ENCODE measurements at regions of chr5 and their contacts with region 1.

Region 1: DNA sequence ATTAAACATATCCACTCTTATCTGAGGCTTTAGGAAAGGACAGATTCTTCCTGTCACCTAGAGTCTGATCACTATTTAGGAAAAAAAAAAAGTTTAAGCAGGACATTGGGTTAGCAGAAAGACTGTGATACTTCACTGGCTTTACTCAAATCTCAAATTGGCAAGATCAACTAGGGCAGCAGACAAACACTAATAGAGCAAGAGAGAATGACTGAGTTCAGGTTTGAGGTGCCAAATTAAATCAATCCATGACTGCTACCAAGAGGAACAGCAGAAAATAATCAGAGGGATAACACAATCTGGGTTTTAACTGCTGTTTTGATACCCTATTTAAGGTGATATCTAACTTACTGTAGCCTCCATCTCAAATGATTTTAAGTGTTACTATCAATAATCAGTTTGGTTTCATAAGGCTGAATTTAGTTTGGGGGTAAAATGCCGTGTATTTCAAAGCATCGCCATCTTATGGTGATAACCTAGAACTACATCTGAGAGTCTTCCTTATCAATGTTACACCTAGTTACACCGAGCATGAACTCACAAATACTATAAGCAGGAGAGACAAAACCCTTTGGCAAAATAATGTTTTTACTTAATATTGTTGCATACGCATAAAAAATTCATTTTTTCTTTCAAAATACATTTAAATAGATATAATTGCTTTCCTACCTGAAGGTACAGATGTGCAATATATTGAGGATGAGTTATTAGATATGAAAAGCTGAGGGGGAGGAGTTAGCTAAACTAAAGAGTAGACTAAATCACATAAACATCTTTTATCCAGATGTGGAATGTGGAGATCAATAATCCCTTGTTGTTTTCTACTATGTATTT is 286.4 kb upstream of the CDH12 start:
- DNase-seq: no peak
- ATAC-seq: peak; percentile 94 to 97 (median 96)
- H3K4me3 ChIP-seq: no peak overlapping the region
- H3K27ac ChIP-seq: peak overlapping the region in 1 of 3 donors; percentile 26
- H3K4me1 ChIP-seq: peaks cover 0 to 20% (median 1%) of the 10 kb centered on the region in 4 donors
- H3K27me3 ChIP-seq: no peaks in the 10 kb centered on the region
- CTCF ChIP-seq: peak; percentile 48 to 76 (median 68)
- POLR2A ChIP-seq: no peak

Region 2: GRCh38 chr5:22889718-22890117 is 249.8 kb before region 1 on chr5:
- intact Hi-C with region 1: loop called (anchors 10 kb)
- DNase-seq: no peak
- ATAC-seq: peak; percentile 62 to 82 (median 78)
- H3K4me3 ChIP-seq: no peak overlapping the region
- H3K27ac ChIP-seq: no peak overlapping the region
- H3K4me1 ChIP-seq: no peaks in the 10 kb centered on the region
- H3K27me3 ChIP-seq: no peaks in the 10 kb centered on the region
- CTCF ChIP-seq: peak; percentile 41 to 50 (median 46)
- POLR2A ChIP-seq: no peak

Region 3: DNA sequence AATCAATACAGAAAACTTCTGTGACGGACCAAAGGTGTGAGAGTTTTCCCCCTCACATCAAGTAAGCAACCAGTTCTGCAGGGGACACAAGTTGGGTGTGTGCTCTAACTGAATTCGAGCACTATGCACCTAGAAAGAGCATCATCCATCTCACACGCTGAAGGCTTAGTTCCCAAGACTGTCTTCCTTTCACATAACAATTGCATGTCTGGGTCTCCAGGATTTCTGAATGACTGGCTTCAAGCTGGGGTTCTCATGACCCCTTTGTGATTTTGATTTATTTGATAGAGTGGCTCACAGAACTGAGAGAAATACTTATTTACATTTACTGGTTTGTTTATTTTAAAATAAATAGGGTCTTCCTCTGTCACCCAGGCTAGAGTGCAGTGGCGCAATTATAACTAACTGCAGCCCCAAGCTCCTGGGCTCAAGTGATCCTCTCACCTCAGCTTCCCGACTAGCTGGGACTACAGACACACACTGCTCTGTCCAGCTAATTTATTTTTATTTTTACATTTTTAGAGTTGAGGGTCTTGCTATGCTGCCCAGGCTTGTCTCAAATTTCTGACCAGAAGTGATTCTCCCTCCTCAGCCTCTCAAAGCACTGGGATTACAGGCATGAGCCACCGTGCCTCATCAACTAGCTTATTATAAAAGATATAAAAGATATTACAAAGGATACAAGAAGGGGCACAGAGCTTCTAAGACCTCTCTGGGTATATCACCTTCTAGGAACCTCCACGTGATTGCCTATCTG is 30.3 kb after region 1 on chr5:
- intact Hi-C with region 1: no loop called
- DNase-seq: no peak
- ATAC-seq: no peak
- H3K4me3 ChIP-seq: no peak overlapping the region
- H3K27ac ChIP-seq: no peak overlapping the region
- H3K4me1 ChIP-seq: no peaks in the 10 kb centered on the region
- H3K27me3 ChIP-seq: no peaks in the 10 kb centered on the region
- CTCF ChIP-seq: no peak
- POLR2A ChIP-seq: no peak

Region 4: GRCh38 chr5:23507278-23507685 is 367.7 kb after region 1 on chr5 and contains the start of gene PRDM9:
- intact Hi-C with region 1: no loop called
- DNase-seq: peak; percentile 67 to 90 (median 88)
- ATAC-seq: peak; percentile 87 to 98 (median 98)
- H3K4me3 ChIP-seq: peak within 1 kb of the TSS; percentile 16 to 40 (median 33)
- H3K27ac ChIP-seq: peak within 1 kb of the TSS in 2 of 3 donors; percentile 44 to 60
- H3K4me1 ChIP-seq: no peaks in the 10 kb centered on the region
- H3K27me3 ChIP-seq: no peaks in the 10 kb centered on the region
- CTCF ChIP-seq: no peak
- POLR2A ChIP-seq: no peak
- total RNA-seq, gene PRDM9: not detected

Measured in right lobe of liver (tissue), 6 donors.